Mucosa of descending colon (tissue), 3 donors: ENCODE measurements at regions of chr3 and their contacts with region 1.

Region 1: GRCh38 chr3:88203642-88204055 is 53.9 kb downstream of the C3orf38 start:
- DNase-seq: peak in 2 of 3 donors; percentile 69 to 86
- ATAC-seq: peak; percentile 82
- H3K4me3 ChIP-seq: no peak overlapping the region
- H3K4me1 ChIP-seq: no peaks in the 10 kb centered on the region
- CTCF ChIP-seq: peak; percentile 63

Region 2: GRCh38 chr3:88058591-88059368 is 144.9 kb before region 1 on chr3 and contains the starts of genes CGGBP1 and ZNF654:
- intact Hi-C with region 1: no loop called
- DNase-seq: peak; percentile 98 to 99 (median 99)
- ATAC-seq: peak; percentile 96
- H3K4me3 ChIP-seq: peak within 1 kb of the TSS; percentile 67
- H3K4me1 ChIP-seq: peaks cover 24% of the 10 kb centered on the region
- CTCF ChIP-seq: peak; percentile 11
- total RNA-seq, gene CGGBP1: 47.8 to 78.1 (median 60.3) TPM
- total RNA-seq, gene ZNF654: 13.1 to 20.8 (median 17.4) TPM

Region 3: GRCh38 chr3:89098964-89099585 is 895.4 kb after region 1 on chr3:
- intact Hi-C with region 1: loop called in 1 of 2 experiments (anchors 10 kb)
- DNase-seq: peak in 2 of 3 donors; percentile 25 to 45
- ATAC-seq: peak; percentile 77
- H3K4me3 ChIP-seq: no peak overlapping the region
- H3K4me1 ChIP-seq: no peaks in the 10 kb centered on the region
- CTCF ChIP-seq: peak; percentile 88

Region 4: DNA sequence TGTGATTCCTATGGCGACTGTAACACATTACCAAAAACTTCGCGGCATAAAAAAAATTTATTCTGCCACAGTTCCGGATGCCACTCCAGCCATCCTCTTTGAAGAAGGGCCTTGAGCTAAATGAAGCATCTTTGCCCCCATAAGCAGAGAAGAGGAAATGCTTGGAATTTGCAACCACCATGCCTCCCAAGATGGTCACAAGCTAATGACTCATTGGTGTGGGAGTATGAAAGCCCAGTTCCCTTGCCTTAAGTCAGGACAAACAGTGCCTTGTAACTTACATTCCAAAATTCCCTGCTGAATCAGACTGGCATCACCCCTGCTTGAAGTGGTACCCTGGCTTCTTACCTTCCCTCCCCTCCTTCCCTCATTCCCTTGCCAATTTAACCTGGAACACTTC is 1981.2 kb after region 1 on chr3:
- intact Hi-C with region 1: loop called in 1 of 2 experiments (anchors 10 kb)
- DNase-seq: no peak
- ATAC-seq: no peak
- H3K4me3 ChIP-seq: no peak overlapping the region
- H3K4me1 ChIP-seq: peaks cover 2% of the 10 kb centered on the region
- CTCF ChIP-seq: no peak